ENCODE measurements at regions of chr6 and their contacts with region 1.

Region 1: GRCh38 chr6:97059473-97059872 is 134.9 kb downstream of the KLHL32 start:
- DNase-seq: no peak
- H3K4me3 Mint-ChIP-seq: no peak overlapping the region
- H3K27ac Mint-ChIP-seq: no peak overlapping the region
- H3K4me1 Mint-ChIP-seq: peaks cover 2% of the 10 kb centered on the region
- H3K27me3 Mint-ChIP-seq: no peaks in the 10 kb centered on the region

Region 2: DNA sequence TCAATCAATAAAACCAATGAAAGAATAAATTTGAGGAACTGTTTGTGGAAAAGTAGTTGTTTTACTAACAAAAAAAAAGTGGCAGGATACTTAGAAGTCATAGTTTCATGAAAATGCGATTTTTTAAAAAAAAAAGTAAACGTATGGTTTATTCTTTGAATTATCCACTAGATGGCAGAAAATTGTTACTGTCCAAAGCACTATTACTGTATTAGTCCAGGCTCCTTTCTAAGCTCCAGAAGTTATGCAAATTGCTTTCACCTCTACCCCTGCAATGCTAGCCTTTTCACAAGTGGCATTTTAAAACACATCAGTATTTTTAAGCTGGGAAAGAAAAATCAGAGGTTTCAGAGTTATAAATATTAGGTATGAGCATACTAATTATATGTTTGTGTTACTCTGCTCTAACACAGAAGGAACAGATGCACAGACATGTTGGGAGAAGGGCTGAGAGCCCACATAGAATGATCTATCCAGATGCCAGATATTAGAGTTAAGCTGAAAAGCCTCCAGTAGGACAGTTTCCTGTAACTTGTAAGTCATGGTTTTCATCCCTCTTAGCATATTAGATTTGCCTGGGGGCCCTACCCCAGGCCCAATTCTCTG is 432.6 kb before region 1 on chr6:
- CTCF ChIA-PET with region 1: interaction called, 26 read pairs
- POLR2A ChIA-PET with region 1: no interaction called
- DNase-seq: no peak
- H3K4me3 Mint-ChIP-seq: no peak overlapping the region
- H3K27ac Mint-ChIP-seq: no peak overlapping the region
- H3K4me1 Mint-ChIP-seq: peaks cover 4% of the 10 kb centered on the region
- H3K27me3 Mint-ChIP-seq: peaks cover 15% of the 10 kb centered on the region

Measured in activated CD4-positive, alpha-beta memory T cell treated with anti-CD3 and anti-CD28 coated beads, Interleukin-2, amount 10 ng/mL, durations not matched to agents 7 days and 5 days (primary cell).